PC-3 (cell line): ENCODE measurements at regions of chr5 and their contacts with region 1.

Region 1: DNA sequence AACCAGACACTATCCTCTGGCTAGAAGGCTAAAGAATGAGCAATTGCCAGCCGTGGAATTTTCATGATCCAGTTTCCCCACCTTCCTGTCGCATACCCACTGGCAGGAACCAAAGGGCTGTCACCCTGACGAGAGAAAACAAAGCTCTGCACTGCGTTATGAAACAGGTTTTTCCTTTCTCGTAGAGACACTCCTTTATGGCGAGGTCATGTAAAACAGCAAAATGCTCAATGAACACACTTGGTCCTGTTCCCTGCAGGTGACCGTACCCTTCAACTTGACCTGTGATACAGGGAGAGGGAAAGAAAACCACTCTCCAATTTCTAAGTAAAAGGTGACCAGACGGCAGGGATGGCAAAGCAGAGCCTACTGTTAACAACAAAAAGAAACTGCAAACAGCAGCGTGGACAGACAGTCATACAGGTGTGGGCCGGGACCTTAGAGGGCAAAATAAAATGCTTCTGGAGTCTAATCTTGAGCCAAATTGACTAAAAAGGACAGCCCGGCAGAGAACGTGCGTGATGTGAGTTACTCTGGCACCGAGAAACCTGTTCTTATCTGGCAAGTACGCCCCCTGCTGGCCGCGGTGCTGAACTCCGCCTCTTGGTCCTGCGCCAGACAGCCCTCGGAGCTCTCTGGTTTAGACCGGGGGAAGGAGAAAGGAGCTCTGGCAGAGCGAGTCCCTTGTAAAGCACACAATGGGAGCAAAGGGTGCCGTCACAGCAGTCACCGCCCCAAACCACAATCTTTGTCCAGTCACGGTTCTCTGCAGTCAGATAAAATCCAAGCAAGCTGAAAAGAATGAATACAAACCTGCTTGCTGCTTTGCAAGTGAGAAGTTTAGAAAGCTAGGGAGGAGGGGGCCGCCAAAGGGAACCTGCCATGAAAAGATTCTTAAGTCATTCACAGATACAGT is 98.9 kb downstream of the EFNA5 start:
- DNase-seq: peak; percentile 99
- ATAC-seq: peak; percentile 98
- H3K4me3 ChIP-seq: peak overlapping the region; percentile 78
- H3K27ac ChIP-seq: peak overlapping the region; percentile 93
- H3K4me1 ChIP-seq: peaks cover 60% of the 10 kb centered on the region
- H3K27me3 ChIP-seq: no peaks in the 10 kb centered on the region
- CTCF ChIP-seq: peak; percentile 95

Region 2: DNA sequence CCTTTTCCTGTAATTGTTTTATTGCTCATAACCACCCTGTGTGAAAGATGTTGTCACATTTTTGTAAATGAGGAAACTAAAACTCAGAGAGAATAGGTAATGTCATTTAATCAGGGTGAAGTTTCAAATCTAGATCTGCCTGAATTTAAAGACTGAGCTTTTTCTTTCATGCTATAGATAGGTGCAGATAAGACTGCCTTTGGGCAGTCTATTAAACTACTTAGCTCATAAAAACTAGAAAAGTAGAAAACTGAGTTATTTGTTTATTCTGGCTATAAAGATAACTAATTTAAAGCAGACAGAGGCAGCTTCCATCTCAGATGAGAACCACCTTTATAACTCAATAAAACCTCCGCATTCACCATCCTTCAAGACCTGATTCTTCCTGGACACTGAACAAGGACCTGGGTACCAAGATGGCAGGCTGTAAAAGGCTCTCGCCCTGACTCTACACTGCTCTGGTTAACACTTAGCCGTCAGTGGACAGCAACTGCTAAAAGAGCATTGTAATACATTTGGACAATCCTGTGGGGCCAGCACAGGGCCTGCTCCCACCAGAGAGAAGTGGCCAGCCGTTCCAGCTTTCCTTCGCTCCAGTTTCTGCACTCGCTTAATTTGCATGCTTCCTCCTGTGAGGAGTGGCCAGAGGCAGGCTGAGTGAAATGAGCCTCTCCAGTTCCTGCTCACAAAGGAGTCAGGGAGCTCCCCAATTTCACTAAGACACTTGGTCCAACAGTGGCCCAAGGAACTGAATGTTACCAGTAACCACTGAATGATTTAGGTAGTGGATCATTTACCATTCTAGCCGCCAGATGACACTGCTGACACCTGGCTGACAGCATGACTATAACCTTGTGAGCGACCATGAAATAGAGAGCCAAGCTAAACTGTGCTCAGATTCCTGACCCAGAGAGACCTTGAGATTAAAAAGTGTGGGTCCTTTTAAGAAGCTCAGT is 467.6 kb before region 1 on chr5:
- CTCF ChIA-PET with region 1: no interaction called
- POLR2A ChIA-PET with region 1: no interaction called
- intact Hi-C with region 1: loop called (anchors 10 kb)
- DNase-seq: peak; percentile 40
- ATAC-seq: peak; percentile 48; the same call in 1 of the 2 replicates
- H3K4me3 ChIP-seq: no peak overlapping the region
- H3K27ac ChIP-seq: no peak overlapping the region
- H3K4me1 ChIP-seq: no peaks in the 10 kb centered on the region
- H3K27me3 ChIP-seq: no peaks in the 10 kb centered on the region
- CTCF ChIP-seq: peak; percentile 55; the same call in 1 of the 2 replicates

Region 3: GRCh38 chr5:107217721-107218130 is 354.2 kb before region 1 on chr5:
- CTCF ChIA-PET with region 1: no interaction called
- POLR2A ChIA-PET with region 1: no interaction called
- intact Hi-C with region 1: no loop called
- DNase-seq: peak; percentile 91
- ATAC-seq: peak; percentile 91
- H3K4me3 ChIP-seq: peak overlapping the region; percentile 33; the same call in 1 of the 2 replicates
- H3K27ac ChIP-seq: peak overlapping the region; percentile 55
- H3K4me1 ChIP-seq: peaks cover 36% of the 10 kb centered on the region
- H3K27me3 ChIP-seq: no peaks in the 10 kb centered on the region
- CTCF ChIP-seq: no peak

Region 4: GRCh38 chr5:107425541-107426256 is 146.2 kb before region 1 on chr5:
- CTCF ChIA-PET with region 1: interaction called, 6 read pairs
- POLR2A ChIA-PET with region 1: no interaction called
- intact Hi-C with region 1: loop called (anchors 1 kb)
- DNase-seq: peak; percentile 83
- ATAC-seq: peak; percentile 86
- H3K4me3 ChIP-seq: peak overlapping the region; percentile 38; the same call in 1 of the 2 replicates
- H3K27ac ChIP-seq: peak overlapping the region; percentile 89
- H3K4me1 ChIP-seq: peaks cover 40% of the 10 kb centered on the region
- H3K27me3 ChIP-seq: no peaks in the 10 kb centered on the region
- CTCF ChIP-seq: no peak

Region 5: DNA sequence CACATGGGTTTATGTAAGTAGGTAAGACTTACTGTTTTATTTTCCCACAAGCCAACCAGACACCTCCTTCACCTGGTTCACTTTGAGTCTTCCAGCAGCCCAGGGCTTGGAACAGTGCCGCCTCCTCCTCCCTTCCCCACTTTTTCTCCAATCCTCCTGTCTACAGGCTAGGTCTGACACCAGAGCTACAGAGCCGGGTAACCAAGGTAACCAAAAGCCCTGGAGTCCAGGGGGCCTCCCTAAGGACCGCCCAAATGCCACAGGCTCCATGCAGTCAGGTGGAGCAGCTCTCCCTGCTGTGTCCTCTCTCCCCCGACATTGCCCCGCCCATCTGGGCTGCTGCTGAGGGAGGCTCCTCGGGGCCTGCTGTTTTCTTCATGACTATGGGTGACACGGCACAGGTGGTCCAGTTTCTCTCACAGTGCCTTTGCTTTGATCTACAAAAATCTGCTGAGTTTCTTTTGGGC is 236.8 kb after region 1 on chr5:
- CTCF ChIA-PET with region 1: no interaction called
- POLR2A ChIA-PET with region 1: no interaction called
- intact Hi-C with region 1: loop called (anchors 10 kb)
- DNase-seq: no peak
- ATAC-seq: no peak
- H3K4me3 ChIP-seq: no peak overlapping the region
- H3K27ac ChIP-seq: no peak overlapping the region
- H3K4me1 ChIP-seq: peaks cover 22% of the 10 kb centered on the region
- H3K27me3 ChIP-seq: no peaks in the 10 kb centered on the region
- CTCF ChIP-seq: no peak

Region 6: DNA sequence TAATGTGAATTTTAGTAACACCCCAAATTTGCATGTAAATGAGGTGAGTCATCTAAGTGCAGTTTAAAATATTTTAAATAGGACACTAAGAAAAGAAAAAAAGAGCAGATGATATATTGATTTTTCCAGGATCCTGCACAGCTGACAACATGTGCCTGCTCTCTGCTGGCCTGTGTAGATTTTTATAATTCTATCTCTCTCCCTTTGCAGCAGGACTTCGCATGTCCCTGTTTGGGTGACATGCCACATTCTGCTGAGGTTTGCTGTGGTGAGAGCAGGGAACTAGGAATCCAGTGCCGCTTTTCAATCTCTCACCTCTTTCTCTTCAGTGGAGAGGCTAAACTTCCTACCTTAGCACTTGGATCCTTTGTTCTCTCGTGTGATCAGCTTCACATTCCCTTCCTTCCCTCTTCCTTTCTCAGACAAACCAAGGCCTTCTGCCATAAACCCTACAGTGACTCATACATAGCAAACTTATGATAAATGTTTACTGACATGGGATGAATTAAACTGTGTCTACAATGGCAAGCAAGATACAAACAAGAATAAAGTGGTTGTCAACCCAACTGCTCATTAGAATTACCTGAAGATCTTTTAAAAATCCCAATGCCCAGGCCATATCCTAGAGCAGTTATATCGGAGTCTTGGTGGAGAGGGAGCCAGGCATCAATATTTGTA is 297.7 kb after region 1 on chr5:
- CTCF ChIA-PET with region 1: no interaction called
- POLR2A ChIA-PET with region 1: no interaction called
- intact Hi-C with region 1: loop called (anchors 2 kb)
- DNase-seq: peak; percentile 96
- ATAC-seq: peak; percentile 93
- H3K4me3 ChIP-seq: peak overlapping the region; percentile 7; the same call in 1 of the 2 replicates
- H3K27ac ChIP-seq: peak overlapping the region; percentile 81
- H3K4me1 ChIP-seq: peaks cover 30% of the 10 kb centered on the region
- H3K27me3 ChIP-seq: no peaks in the 10 kb centered on the region
- CTCF ChIP-seq: no peak

Region 7: GRCh38 chr5:108061941-108062340 is 490.1 kb after region 1 on chr5:
- CTCF ChIA-PET with region 1: no interaction called
- POLR2A ChIA-PET with region 1: no interaction called
- intact Hi-C with region 1: loop called (anchors 10 kb)
- DNase-seq: no peak
- ATAC-seq: no peak
- H3K4me3 ChIP-seq: no peak overlapping the region
- H3K27ac ChIP-seq: no peak overlapping the region
- H3K4me1 ChIP-seq: no peaks in the 10 kb centered on the region
- H3K27me3 ChIP-seq: no peaks in the 10 kb centered on the region
- CTCF ChIP-seq: no peak

Region 8: DNA sequence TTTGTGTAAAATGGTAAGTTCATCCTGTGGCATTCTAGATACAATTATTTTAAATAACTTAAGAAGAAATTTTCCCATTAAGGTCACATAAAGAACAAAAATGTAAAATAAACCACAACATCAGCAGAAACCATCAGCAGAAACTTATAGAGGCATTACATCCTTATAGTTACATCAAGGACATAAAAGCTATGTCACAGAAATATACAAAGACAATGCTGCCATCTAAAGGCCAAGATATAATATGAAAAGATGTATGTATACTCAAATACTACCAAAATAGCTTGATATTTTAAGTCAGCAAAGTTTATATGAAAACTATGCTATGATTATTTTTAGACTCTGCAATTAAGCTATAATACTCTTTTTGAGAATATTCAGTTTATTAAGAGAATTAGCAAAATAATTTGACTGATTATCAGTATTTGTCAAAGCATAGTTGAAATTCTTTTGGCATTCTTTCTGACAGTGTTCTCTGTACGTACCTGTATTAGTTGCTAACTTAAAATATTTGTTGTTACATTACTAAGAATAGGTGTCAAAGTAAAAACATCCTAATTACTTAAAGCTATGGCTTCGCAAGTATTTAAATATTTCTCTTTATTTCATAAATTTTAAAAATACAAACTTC is 773.8 kb after region 1 on chr5:
- CTCF ChIA-PET with region 1: interaction called, 3 read pairs
- POLR2A ChIA-PET with region 1: no interaction called
- intact Hi-C with region 1: loop called (anchors 10 kb)
- DNase-seq: peak; percentile 77
- ATAC-seq: peak; percentile 88
- H3K4me3 ChIP-seq: no peak overlapping the region
- H3K27ac ChIP-seq: no peak overlapping the region
- H3K4me1 ChIP-seq: no peaks in the 10 kb centered on the region
- H3K27me3 ChIP-seq: no peaks in the 10 kb centered on the region
- CTCF ChIP-seq: peak; percentile 87